ENCODE measurements at regions of chr5 and their contacts with region 1.

Region 1: DNA sequence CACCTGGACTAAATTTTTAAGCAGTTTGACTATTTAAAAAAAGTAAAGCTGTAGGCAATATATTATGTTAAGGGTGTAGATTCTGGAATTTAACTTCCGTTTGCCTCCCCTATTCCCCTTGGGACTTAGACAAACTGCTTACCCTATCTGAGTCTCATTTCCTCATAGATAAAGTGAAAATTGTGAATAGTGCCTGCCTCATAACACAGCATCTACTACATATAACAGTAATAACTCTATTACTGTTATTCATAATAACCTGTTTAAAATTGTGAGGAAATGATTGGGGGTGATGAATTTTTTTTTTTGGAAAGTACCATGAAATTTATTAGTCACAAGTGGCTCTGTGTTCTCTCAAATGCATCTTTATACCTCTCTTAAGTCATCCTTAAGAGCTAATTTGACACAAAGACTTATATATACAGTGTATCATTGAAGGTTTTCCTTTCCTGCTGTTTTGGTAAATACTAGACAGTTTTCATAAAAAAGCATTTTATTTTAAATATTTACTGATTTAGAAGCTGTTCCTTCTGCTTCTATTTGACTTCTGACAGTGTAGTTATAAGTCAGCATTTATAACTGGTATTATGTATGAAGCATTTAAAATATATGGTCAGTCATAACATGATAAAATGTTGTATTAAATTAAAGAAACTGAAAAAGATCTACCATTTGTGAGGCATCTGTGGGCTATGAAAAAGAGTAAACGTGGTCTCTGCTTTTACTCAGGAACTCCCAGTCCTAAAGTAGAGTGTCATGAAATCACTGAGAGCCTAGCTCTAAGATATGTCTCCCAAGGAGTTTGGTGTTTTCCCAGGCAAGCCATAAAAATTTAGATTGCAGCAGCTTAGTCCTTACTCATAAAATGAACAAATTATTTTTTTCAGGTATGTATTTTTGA is 46.4 kb downstream of the MCCC2 start:
- DNase-seq: no peak
- H3K4me3 ChIP-seq: no peak overlapping the region
- H3K27ac ChIP-seq: no peak overlapping the region
- H3K4me1 ChIP-seq: no peaks in the 10 kb centered on the region
- H3K27me3 ChIP-seq: no peaks in the 10 kb centered on the region
- CTCF ChIP-seq: no peak
- POLR2A ChIP-seq: no peak

Region 2: GRCh38 chr5:71623221-71623794 is 10.2 kb before region 1 on chr5:
- CTCF ChIA-PET with region 1: interaction called, 3 read pairs
- POLR2A ChIA-PET with region 1: no interaction called
- dilution Hi-C with region 1: no loop called
- intact Hi-C with region 1: loop called (anchors 1 kb)
- DNase-seq: no peak
- H3K4me3 ChIP-seq: no peak overlapping the region
- H3K27ac ChIP-seq: no peak overlapping the region
- H3K4me1 ChIP-seq: no peaks in the 10 kb centered on the region
- H3K27me3 ChIP-seq: no peaks in the 10 kb centered on the region
- CTCF ChIP-seq: no peak
- POLR2A ChIP-seq: no peak

Measured in endothelial cell of umbilical vein (primary cell).